ENCODE measurements at regions of chr4 and their contacts with region 1.

Region 1: DNA sequence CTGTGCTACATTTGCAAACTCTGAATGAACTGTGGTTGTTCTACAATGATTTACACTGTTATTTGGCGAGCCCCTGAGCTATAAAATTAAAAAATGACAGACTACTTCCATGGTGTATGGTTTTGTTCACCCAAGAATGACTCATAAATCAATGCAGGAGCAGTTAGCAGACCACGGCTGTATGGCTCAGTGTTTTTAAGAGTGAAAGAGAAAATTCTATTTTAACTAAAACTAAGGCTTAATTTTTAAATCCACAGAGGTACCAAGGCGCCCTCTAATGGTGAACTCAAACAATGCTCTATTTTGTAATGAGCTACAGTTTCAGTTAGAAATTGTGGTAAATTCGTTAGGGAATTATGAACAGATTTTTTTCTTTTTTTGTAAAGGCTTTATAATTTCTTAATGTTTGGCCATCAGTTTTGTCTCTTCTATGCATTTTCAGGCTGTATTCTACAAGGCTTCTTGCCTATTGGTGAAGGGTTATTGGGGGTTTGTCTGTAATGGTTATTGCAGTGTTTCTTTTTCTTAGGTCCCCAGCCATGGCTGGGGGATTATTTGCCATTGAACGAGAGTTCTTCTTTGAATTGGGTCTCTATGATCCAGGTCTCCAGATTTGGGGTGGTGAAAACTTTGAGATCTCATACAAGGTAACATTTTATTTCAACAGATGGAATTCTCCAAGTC is 32.5 kb downstream of the HMGB2 start:
- DNase-seq: peak; percentile 3
- ATAC-seq: no peak
- H3K4me3 ChIP-seq: no peak overlapping the region
- H3K27ac ChIP-seq: no peak overlapping the region
- H3K4me1 ChIP-seq: no peaks in the 10 kb centered on the region
- H3K27me3 ChIP-seq: no peaks in the 10 kb centered on the region
- CTCF ChIP-seq: peak; percentile 56 to 89 (median 66); a peak in 5 of 6 replicates
- POLR2A ChIP-seq: no peak
- RAD21 ChIP-seq: peak; percentile 68

Region 2: GRCh38 chr4:172892300-172892699 is 409.4 kb before region 1 on chr4:
- CTCF ChIA-PET with region 1: interaction called, 8 read pairs
- POLR2A ChIA-PET with region 1: no interaction called
- RAD21 ChIA-PET with region 1: interaction called in 1 of 2 experiments, 3 read pairs
- intact Hi-C with region 1: loop called (anchors 5 kb)
- DNase-seq: peak; percentile 18
- ATAC-seq: peak; percentile 63
- H3K4me3 ChIP-seq: no peak overlapping the region
- H3K27ac ChIP-seq: no peak overlapping the region
- H3K4me1 ChIP-seq: no peaks in the 10 kb centered on the region
- H3K27me3 ChIP-seq: no peaks in the 10 kb centered on the region
- CTCF ChIP-seq: peak; percentile 29 to 80 (median 77); a peak in 4 of 6 replicates
- POLR2A ChIP-seq: no peak
- RAD21 ChIP-seq: peak; percentile 58

Region 3: DNA sequence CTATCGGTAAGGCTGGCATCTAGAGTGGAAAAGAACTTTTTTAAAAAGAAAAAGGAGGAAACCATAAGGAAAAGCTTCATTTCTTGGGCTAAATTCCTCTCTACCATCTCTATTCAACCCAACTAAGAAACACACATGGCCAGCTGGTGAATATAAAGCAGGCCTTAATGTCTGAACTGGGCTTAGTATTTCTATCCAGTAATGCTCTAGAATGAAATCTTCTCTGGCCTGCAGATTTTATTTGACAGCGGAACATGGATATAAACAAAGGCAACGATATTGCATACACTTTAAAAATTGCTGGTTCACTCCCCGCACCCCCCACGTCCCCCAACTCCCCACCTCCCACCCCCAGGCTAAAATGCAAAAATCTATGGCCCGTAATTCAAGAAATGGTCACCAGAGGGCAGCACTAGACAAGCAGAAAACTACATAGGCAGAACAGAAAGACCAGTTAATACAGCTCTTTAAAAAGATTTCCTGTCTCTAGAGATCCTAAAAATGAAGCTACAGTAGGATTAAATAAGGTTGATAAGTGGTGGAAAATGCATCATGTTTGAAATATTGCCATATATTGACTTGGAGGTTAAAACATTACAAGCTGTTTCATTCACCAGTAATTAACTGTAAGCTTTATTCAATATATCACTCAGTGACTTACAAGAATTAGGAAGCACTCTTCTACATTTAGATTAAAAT is 288.3 kb before region 1 on chr4:
- CTCF ChIA-PET with region 1: interaction called, 71 read pairs
- POLR2A ChIA-PET with region 1: no interaction called
- RAD21 ChIA-PET with region 1: interaction called, 11 to 15 read pairs
- intact Hi-C with region 1: loop called (anchors 2 kb)
- DNase-seq: no peak
- ATAC-seq: peak; percentile 61
- H3K4me3 ChIP-seq: no peak overlapping the region
- H3K27ac ChIP-seq: no peak overlapping the region
- H3K4me1 ChIP-seq: peaks cover 0 to 9% of the 10 kb centered on the region in 2 experiments; a peak in 2 of 4 replicates
- H3K27me3 ChIP-seq: no peaks in the 10 kb centered on the region
- CTCF ChIP-seq: peak; percentile 50 to 71 (median 69)
- POLR2A ChIP-seq: no peak
- RAD21 ChIP-seq: peak; percentile 81

Region 4: GRCh38 chr4:173280998-173281397 is 20.7 kb before region 1 on chr4:
- CTCF ChIA-PET with region 1: interaction called, 10 read pairs
- POLR2A ChIA-PET with region 1: no interaction called
- RAD21 ChIA-PET with region 1: no interaction called
- intact Hi-C with region 1: no loop called
- DNase-seq: no peak
- ATAC-seq: peak; percentile 61
- H3K4me3 ChIP-seq: no peak overlapping the region
- H3K27ac ChIP-seq: no peak overlapping the region
- H3K4me1 ChIP-seq: no peaks in the 10 kb centered on the region
- H3K27me3 ChIP-seq: no peaks in the 10 kb centered on the region
- CTCF ChIP-seq: peak in 1 of 3 experiments; percentile 21; a peak in 1 of 6 replicates
- POLR2A ChIP-seq: no peak
- RAD21 ChIP-seq: peak; percentile 29; the same call in 1 of the 2 replicates